Vagina (tissue), 2 donors: ENCODE measurements at regions of chr11 and their contacts with region 1.

Region 1: DNA sequence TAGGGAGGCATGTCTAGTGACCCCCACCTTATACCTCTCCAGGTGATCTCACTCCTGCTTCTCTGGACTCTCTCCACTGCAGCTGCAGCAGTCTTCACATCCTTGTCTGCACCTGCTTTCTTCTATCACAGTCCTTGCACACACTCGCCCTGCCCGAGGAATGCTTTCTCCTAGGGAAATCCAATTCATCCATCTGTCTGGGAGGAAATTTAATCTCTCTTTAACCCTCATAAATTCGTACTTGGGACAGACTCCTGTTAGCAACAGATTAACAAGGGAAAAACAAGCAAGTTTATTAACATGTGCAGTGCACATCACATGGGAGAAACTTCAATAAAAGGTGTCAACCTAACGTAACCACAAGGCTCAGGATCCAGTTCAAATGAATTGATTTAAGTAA is 11.3 kb upstream of the RCN1 start:
- DNase-seq: no peak
- H3K4me3 ChIP-seq: no peak overlapping the region
- H3K27ac ChIP-seq: no peak overlapping the region
- H3K4me1 ChIP-seq: peaks cover 14% of the 10 kb centered on the region
- H3K27me3 ChIP-seq: no peaks in the 10 kb centered on the region
- CTCF ChIP-seq: no peak
- POLR2A ChIP-seq: no peak

Region 2: GRCh38 chr11:32115446-32115845 is 35.9 kb after region 1 on chr11:
- intact Hi-C with region 1: loop called (anchors 2 kb)
- DNase-seq: no peak
- H3K4me3 ChIP-seq: no peak overlapping the region
- H3K27ac ChIP-seq: no peak overlapping the region
- H3K4me1 ChIP-seq: no peaks in the 10 kb centered on the region
- H3K27me3 ChIP-seq: no peaks in the 10 kb centered on the region
- CTCF ChIP-seq: no peak
- POLR2A ChIP-seq: no peak